ENCODE measurements at regions of chr19 and their contacts with region 1.

Region 1: GRCh38 chr19:40425450-40426287 is at the start of gene SERTAD1:
- DNase-seq: peak; percentile 100
- ATAC-seq: peak; percentile 93
- H3K4me3 ChIP-seq: peak within 1 kb of the TSS; percentile 72 to 92
- H3K4me3 Mint-ChIP-seq: peak within 1 kb of the TSS; percentile 92
- H3K27ac ChIP-seq: peak within 1 kb of the TSS; percentile 91 to 92
- H3K27ac Mint-ChIP-seq: peak within 1 kb of the TSS; percentile 98
- H3K4me1 ChIP-seq: peaks cover 17% of the 10 kb centered on the region
- H3K4me1 Mint-ChIP-seq: peaks cover 28% of the 10 kb centered on the region
- H3K27me3 ChIP-seq: no peaks in the 10 kb centered on the region
- H3K27me3 Mint-ChIP-seq: no peaks in the 10 kb centered on the region
- CTCF ChIP-seq: peak; percentile 55
- total RNA-seq, gene SERTAD1: 36.7 to 38.7 TPM

Region 2: GRCh38 chr19:40403262-40403984 is 22.2 kb before region 1 on chr19:
- CTCF ChIA-PET with region 1: interaction called, 16 read pairs
- POLR2A ChIA-PET with region 1: interaction called, 14 read pairs
- intact Hi-C with region 1: loop called (anchors 1 kb)
- DNase-seq: peak; percentile 56 to 83 (median 77)
- ATAC-seq: peak; percentile 55
- H3K4me3 ChIP-seq: peak overlapping the region; percentile 70 to 89
- H3K4me3 Mint-ChIP-seq: peak overlapping the region; percentile 95
- H3K27ac ChIP-seq: peak overlapping the region; percentile 56 to 63
- H3K27ac Mint-ChIP-seq: peak overlapping the region; percentile 84
- H3K4me1 ChIP-seq: peaks cover 13% of the 10 kb centered on the region
- H3K4me1 Mint-ChIP-seq: peaks cover 29% of the 10 kb centered on the region
- H3K27me3 ChIP-seq: no peaks in the 10 kb centered on the region
- H3K27me3 Mint-ChIP-seq: no peaks in the 10 kb centered on the region
- CTCF ChIP-seq: no peak

Region 3: GRCh38 chr19:40413291-40413845 is 12.3 kb before region 1 on chr19 and contains the start of gene PRX:
- CTCF ChIA-PET with region 1: interaction called, 13 read pairs
- POLR2A ChIA-PET with region 1: interaction called, 4 read pairs
- intact Hi-C with region 1: no loop called
- DNase-seq: no peak
- ATAC-seq: no peak
- H3K4me3 ChIP-seq: no peak within 1 kb of the TSS
- H3K4me3 Mint-ChIP-seq: no peak within 1 kb of the TSS
- H3K27ac ChIP-seq: no peak within 1 kb of the TSS
- H3K27ac Mint-ChIP-seq: no peak within 1 kb of the TSS
- H3K4me1 ChIP-seq: peaks cover 8% of the 10 kb centered on the region
- H3K4me1 Mint-ChIP-seq: peaks cover 9% of the 10 kb centered on the region
- H3K27me3 ChIP-seq: no peaks in the 10 kb centered on the region
- H3K27me3 Mint-ChIP-seq: peaks cover 2% of the 10 kb centered on the region
- CTCF ChIP-seq: no peak
- total RNA-seq, gene PRX: 1.1 to 1.4 TPM

Region 4: DNA sequence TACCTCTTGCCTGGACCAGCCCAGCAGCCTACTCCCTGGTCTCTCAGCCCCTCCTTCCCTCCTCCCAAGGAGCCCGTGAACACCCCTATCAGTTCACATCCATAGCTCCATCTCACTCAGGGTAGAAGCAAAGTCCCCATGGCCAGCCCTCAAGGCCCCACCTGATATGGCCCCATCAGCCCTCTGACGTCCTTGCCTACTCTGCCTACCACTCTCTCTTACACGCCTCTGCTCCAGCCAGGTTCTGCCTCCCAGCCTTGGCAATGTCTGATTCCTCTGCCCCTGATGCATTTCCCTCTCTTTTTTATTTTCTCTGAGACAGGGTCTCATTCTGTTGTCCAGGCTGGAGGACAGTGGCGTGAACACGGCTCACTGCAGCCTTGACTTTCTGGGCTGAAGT is 26.3 kb after region 1 on chr19:
- CTCF ChIA-PET with region 1: interaction called, 12 read pairs
- POLR2A ChIA-PET with region 1: no interaction called
- intact Hi-C with region 1: no loop called
- DNase-seq: no peak
- ATAC-seq: no peak
- H3K4me3 ChIP-seq: no peak overlapping the region
- H3K4me3 Mint-ChIP-seq: no peak overlapping the region
- H3K27ac ChIP-seq: no peak overlapping the region
- H3K27ac Mint-ChIP-seq: no peak overlapping the region
- H3K4me1 ChIP-seq: no peaks in the 10 kb centered on the region
- H3K4me1 Mint-ChIP-seq: no peaks in the 10 kb centered on the region
- H3K27me3 ChIP-seq: no peaks in the 10 kb centered on the region
- H3K27me3 Mint-ChIP-seq: no peaks in the 10 kb centered on the region
- CTCF ChIP-seq: no peak

Region 5: GRCh38 chr19:40529093-40529954 is 103.7 kb after region 1 on chr19:
- CTCF ChIA-PET with region 1: no interaction called
- POLR2A ChIA-PET with region 1: no interaction called
- intact Hi-C with region 1: loop called in 1 of 2 experiments (anchors 5 kb)
- DNase-seq: peak; percentile 77 to 94 (median 89)
- ATAC-seq: peak; percentile 90
- H3K4me3 ChIP-seq: peak overlapping the region; percentile 41 to 46
- H3K4me3 Mint-ChIP-seq: peak overlapping the region; percentile 66
- H3K27ac ChIP-seq: no peak overlapping the region
- H3K27ac Mint-ChIP-seq: peak overlapping the region; percentile 33
- H3K4me1 ChIP-seq: peaks cover 13% of the 10 kb centered on the region
- H3K4me1 Mint-ChIP-seq: peaks cover 14% of the 10 kb centered on the region
- H3K27me3 ChIP-seq: peaks cover 5 to 8% of the 10 kb centered on the region in 2 experiments
- H3K27me3 Mint-ChIP-seq: peaks cover 20% of the 10 kb centered on the region
- CTCF ChIP-seq: peak; percentile 92

Region 6: GRCh38 chr19:42075616-42076379 is 1650.1 kb after region 1 on chr19 and contains the start of gene ZNF574:
- CTCF ChIA-PET with region 1: no interaction called
- POLR2A ChIA-PET with region 1: no interaction called
- intact Hi-C with region 1: loop called in 1 of 2 experiments (anchors 10 kb)
- DNase-seq: peak; percentile 97 to 100 (median 98)
- ATAC-seq: peak; percentile 95
- H3K4me3 ChIP-seq: peak within 1 kb of the TSS; percentile 72 to 76
- H3K4me3 Mint-ChIP-seq: peak within 1 kb of the TSS; percentile 97
- H3K27ac ChIP-seq: peak within 1 kb of the TSS; percentile 94 to 100
- H3K27ac Mint-ChIP-seq: peak within 1 kb of the TSS; percentile 99
- H3K4me1 ChIP-seq: peaks cover 21% of the 10 kb centered on the region
- H3K4me1 Mint-ChIP-seq: peaks cover 37% of the 10 kb centered on the region
- H3K27me3 ChIP-seq: no peaks in the 10 kb centered on the region
- H3K27me3 Mint-ChIP-seq: no peaks in the 10 kb centered on the region
- CTCF ChIP-seq: no peak
- total RNA-seq, gene ZNF574: 25.0 to 26.2 TPM

Measured in CD8-positive, alpha-beta T cell (primary cell).